ENCODE measurements at regions of chr4 and their contacts with region 1.

Region 1: DNA sequence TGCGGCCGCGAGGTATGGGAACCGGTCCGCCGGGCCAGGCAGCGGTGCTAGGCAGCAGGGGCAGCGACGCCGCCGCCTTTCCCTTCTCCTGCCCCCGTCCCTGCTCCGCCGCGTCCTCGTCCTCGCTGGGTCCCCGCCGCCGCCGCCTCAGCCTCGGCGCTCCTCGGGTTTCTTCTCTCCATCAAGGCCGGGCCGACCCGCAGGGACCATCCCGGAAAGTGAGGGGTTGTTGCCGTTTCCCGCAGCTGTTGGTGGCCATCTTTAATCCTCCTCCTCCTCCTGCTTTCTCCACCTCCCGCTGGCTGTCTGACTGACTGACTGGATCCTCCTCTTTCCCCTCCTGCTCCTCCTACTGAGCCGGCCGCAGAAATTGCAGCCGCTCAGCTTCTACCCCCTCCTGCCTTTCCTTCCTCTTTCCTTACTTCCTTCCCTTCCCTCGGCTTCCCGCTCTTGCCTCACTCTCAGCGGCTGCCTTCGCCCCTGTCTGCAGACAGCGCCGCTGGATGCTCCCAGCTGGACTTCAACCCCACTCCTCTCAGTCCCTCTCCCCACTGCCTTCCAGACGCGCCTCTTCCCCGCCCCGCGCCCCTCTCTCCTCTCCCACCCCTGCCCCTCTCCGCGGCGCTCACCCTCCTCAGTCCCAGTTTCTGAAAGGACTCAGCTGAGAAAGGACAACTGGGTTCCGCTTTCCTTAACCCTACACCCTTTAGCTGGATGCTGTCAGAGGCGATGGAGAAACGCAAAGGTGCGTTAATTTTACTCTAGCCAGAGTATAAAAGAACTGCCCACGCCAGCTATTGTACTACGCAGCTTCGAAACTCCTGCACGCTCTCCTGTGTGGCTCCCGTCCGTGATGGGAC is at the start of gene WDFY3:
- DNase-seq: peak; percentile 79
- H3K4me3 ChIP-seq: peak within 1 kb of the TSS; percentile 92
- H3K27ac ChIP-seq: peak within 1 kb of the TSS; percentile 94
- H3K4me1 ChIP-seq: peaks cover 55% of the 10 kb centered on the region
- H3K27me3 ChIP-seq: no peaks in the 10 kb centered on the region
- CTCF ChIP-seq: peak; percentile 16
- total RNA-seq, gene WDFY3: 48.7 TPM

Region 2: DNA sequence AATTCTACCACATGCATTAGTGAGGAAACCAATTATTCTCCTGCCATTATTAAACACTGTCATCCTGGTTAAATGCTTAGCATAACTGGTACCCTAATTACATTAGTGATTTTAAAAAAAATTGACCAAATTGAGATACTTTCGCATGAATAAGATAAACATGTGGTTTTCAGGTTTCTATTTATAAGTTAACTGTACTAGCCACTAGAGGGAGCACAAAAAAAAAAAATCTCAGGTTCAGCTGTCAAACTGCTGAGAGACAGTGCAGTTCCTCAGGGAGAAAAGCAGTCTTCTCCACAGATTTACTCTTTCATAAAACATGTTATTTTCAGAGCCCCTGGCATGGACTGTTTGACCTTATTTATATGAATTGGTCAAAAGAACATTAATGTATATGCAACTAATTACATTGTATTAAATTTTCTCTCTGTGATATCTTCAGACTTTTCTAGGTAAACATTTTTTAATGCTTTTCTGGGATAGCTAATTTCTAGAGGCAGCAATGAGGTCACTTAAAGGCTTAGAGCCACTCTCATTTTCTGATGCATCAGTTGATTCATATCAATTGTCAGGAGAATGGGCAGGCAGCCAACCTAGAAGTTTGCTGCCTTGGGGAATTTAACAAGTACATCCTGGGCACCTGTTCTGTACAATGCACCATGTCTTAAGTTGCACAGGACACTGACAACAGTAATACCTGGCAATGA is 216.2 kb before region 1 on chr4:
- intact Hi-C with region 1: loop called (anchors 2 kb)
- DNase-seq: no peak
- H3K4me3 ChIP-seq: no peak overlapping the region
- H3K27ac ChIP-seq: no peak overlapping the region
- H3K4me1 ChIP-seq: peaks cover 24% of the 10 kb centered on the region
- H3K27me3 ChIP-seq: no peaks in the 10 kb centered on the region
- CTCF ChIP-seq: peak; percentile 76

Region 3: GRCh38 chr4:84837751-84838150 is 128.9 kb before region 1 on chr4:
- intact Hi-C with region 1: loop called (anchors 10 kb)
- DNase-seq: no peak
- H3K4me3 ChIP-seq: no peak overlapping the region
- H3K27ac ChIP-seq: no peak overlapping the region
- H3K4me1 ChIP-seq: peaks cover 13% of the 10 kb centered on the region
- H3K27me3 ChIP-seq: no peaks in the 10 kb centered on the region
- CTCF ChIP-seq: no peak

Region 4: DNA sequence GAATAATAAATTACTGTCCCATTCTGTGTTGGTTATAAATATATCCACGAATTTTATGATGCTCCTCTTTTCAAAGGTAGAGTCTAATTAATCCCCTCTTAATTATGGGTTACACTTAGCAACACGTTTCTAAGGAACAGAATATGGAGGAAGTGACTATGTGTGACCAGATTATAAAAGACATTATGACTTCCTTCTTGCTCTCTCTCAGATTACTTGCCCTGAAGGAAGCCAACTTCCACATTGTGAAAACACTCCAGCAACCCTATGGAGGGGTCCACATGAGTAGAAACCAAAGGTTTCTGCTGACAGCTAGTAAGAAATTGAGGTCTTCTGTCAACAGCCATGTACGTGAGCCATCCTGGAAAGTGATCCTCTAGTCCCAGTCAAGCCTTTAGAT is 59.5 kb before region 1 on chr4:
- intact Hi-C with region 1: loop called (anchors 10 kb)
- DNase-seq: no peak
- H3K4me3 ChIP-seq: no peak overlapping the region
- H3K27ac ChIP-seq: no peak overlapping the region
- H3K4me1 ChIP-seq: peaks cover 3% of the 10 kb centered on the region
- H3K27me3 ChIP-seq: no peaks in the 10 kb centered on the region
- CTCF ChIP-seq: no peak

Region 5: DNA sequence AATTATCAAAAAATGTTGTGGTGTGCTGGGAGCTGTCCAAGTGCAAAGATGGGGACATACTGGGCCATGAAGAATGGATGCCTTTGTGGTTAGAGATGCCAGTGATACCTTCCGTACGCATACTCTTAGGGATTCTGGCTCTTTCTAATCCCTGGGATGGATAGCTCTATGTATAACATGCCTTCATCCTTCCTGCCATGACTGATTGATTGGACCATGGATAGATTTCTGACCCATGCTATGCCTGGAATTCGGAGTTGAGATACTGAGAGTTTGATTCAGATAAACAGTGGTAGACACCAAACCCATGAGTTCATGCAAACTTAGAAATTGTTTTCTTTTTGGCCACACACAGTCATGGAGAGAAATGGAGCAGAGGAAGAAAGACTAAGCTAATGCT is 147.1 kb after region 1 on chr4:
- intact Hi-C with region 1: no loop called
- DNase-seq: no peak
- H3K4me3 ChIP-seq: no peak overlapping the region
- H3K27ac ChIP-seq: no peak overlapping the region
- H3K4me1 ChIP-seq: no peaks in the 10 kb centered on the region
- H3K27me3 ChIP-seq: no peaks in the 10 kb centered on the region
- CTCF ChIP-seq: no peak